IMR-90 (cell line): ENCODE measurements at regions of chr21 and their contacts with region 1.

Region 1: DNA sequence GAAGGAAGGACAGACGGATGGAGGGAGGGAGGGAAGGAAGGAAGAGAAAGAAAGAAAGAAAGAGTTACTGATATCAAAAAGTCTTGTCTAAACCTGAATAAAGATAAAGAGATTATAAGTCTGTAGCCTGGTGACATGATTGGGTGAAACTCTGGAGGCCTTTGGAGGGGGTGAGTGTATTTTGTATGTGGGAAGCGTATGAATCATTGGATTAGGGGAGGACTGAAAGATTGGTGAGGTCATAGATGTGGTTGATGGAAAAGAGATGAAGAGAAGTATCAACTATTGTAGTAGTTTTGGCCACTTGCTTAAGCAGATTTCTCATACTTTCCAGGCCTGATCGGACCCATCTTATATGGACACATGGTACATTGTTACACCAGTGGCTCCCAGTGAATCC is 11.5 kb upstream of the KCNJ6 start:
- DNase-seq: no peak
- ATAC-seq: no peak
- H3K4me3 ChIP-seq: no peak overlapping the region
- H3K27ac ChIP-seq: no peak overlapping the region
- H3K4me1 ChIP-seq: no peaks in the 10 kb centered on the region
- H3K27me3 ChIP-seq: peaks cover 5% of the 10 kb centered on the region; the same call in 1 of the 2 replicates
- CTCF ChIP-seq: no peak
- POLR2A ChIP-seq: no peak
- RAD21 ChIP-seq: no peak

Region 2: DNA sequence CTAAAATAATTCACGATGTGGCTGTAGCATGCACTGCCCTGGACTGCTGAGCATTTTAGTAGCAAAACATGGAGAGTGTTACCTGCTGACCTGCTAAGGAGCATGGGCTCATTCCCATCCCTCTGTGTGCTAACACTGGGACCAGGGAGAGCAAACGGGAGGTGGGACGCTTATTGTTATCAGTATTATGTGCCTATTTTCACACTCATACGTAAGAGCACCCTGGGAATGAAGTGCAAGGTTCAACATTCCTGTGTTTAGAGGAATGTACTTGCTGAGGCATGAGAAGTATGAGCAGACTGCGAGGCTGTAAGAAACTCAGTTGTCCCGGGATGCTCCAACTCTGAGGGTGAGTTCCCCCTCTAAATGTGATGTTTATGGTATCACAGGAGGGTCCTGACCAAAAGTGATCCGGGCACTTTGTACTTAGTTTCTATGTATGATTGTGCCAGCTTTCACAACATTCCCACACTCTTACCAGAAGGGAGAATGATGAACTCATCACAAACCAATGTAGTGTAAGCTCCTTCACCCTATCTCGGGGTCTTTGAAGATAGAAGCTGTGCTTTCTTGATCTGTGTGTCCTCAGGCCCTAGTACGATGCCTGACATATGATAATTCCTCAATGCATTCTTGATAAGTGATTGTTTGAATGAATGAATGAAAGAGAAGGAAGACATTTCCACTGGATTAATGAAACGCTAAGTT is 176.3 kb before region 1 on chr21:
- CTCF ChIA-PET with region 1: no interaction called
- POLR2A ChIA-PET with region 1: no interaction called
- dilution Hi-C with region 1: no loop called
- in situ Hi-C with region 1: loop called (anchors 5 kb)
- intact Hi-C with region 1: no loop called
- DNase-seq: peak; percentile 33
- ATAC-seq: peak; percentile 81
- H3K4me3 ChIP-seq: no peak overlapping the region
- H3K27ac ChIP-seq: no peak overlapping the region
- H3K4me1 ChIP-seq: peaks cover 2% of the 10 kb centered on the region
- H3K27me3 ChIP-seq: peaks cover 67% of the 10 kb centered on the region
- CTCF ChIP-seq: no peak
- POLR2A ChIP-seq: no peak
- RAD21 ChIP-seq: no peak

Region 3: DNA sequence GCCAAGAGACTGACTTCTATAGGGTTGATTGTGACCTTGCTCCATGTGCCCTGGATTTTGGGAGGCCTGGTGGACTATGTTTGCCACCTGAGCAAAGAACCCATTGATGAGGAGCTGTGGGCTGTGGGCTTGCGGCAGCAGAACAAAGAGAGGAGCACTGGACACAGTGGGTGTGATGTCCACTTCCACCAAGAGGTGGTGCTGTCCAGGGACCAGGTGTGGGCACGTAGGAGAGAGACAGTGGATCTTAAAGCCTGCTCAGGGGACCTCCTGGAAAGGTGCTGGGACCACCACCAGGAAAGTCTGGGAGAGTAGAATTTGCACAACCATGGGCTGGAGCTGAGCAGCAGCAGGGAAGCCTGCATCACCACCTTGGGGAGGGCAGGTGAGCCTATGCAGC is 771.3 kb after region 1 on chr21:
- CTCF ChIA-PET with region 1: no interaction called
- POLR2A ChIA-PET with region 1: no interaction called
- dilution Hi-C with region 1: no loop called
- in situ Hi-C with region 1: no loop called
- intact Hi-C with region 1: no loop called
- DNase-seq: no peak
- ATAC-seq: no peak
- H3K4me3 ChIP-seq: no peak overlapping the region
- H3K27ac ChIP-seq: no peak overlapping the region
- H3K4me1 ChIP-seq: no peaks in the 10 kb centered on the region
- H3K27me3 ChIP-seq: peaks cover 71% of the 10 kb centered on the region
- CTCF ChIP-seq: no peak
- POLR2A ChIP-seq: no peak
- RAD21 ChIP-seq: no peak